Ascending aorta (tissue), 2 donors: ENCODE measurements at regions of chr1 and their contacts with region 1.

Region 1: DNA sequence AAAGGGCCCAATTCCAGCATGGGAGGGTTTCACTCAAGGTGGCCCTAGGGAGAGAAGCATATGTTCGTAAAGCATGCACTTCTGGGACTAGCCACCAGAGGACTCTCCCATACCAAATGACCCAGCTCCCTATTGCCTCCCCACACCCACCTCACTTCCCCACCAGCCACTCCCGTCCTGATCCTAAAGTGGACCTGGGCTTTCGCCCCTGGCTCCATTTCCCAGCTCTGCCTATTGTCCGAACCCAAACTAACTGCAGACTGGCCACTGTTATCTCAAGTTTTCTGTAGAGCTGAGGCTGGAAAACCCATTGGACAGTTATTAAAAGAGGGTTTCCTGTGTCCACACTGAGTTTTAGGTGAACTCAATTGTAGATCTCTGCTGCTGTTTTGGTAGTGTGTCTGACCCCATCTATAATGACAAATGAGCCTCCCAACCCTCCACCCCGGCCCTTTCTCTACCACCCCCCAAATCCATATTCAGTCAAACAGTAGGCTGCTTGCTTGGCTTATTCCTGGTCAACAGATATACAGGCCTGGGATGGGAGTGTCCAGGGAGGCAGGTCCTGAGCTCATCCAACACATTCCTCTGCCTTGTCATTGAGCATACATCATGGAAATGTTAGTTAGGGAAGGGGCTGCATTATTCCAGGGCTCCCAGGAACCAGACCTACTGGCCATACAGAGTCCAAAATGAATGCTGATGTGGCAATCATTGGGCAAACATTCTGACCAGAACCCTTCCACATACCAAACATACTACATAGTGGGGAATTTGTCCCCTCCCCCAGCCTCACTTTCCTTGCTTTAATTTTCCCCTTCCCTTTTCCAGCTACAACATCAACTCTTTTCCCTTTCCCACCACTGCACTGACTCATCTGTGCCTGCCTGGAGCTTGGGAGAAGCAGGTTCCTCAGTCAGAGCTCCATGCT is 59.2 kb downstream of the ABCA4 start:
- DNase-seq: peak in 1 of 2 donors; percentile 85
- H3K4me3 ChIP-seq: no peak overlapping the region
- H3K27ac ChIP-seq: peak overlapping the region in 1 of 2 donors; percentile 18
- H3K4me1 ChIP-seq: peaks cover 0 to 6% of the 10 kb centered on the region in 2 donors
- H3K27me3 ChIP-seq: no peaks in the 10 kb centered on the region
- CTCF ChIP-seq: peak; percentile 84 to 93 (median 86)

Region 2: DNA sequence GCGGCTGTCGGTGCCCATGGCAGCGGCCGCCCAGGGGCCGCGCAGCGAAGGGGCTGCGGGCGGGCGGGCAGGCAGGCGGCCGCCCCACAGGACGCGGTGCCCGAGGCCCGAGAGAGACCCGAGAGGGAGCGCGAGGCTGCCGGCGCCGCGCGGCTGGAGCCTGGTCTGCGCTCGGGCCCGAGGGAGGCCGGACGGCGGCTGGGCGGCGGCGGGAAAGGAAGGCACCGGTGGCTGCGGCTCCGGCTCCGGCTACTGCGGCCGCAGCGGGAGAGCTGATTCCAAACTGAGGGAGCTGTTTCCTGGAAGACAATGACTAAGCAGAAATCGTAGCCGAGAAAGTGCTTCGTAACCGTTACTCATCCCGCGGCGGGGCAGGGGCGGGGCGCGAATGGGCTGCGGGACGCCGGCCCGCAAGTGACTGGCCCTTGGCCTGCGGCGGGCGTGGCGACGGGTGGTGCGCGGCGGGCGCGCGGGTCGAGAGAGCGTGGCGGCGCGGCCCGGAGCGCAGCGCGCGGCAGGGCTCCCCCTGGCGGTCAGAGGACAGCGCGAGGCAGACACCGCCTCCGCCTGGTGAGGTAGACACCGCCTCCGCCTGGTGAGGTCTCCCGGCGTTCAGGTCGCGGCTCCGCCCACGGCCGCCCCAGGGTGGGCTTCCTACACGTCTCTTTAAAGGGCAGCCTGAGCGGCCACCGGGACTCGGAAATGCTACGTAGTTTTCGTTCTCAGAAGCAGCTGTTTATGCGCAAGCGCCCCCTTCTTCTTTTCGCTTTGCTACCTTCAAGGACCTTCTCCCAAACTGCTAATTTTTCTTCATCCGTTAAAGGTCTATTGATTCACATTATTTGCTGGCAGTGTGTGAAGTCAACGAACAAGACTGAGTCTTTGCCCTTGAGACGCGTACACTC is 152.4 kb before region 1 on chr1 and contains the start of gene GCLM:
- intact Hi-C with region 1: no loop called
- DNase-seq: peak; percentile 79 to 97
- H3K4me3 ChIP-seq: peak within 1 kb of the TSS; percentile 92 to 96
- H3K27ac ChIP-seq: peak within 1 kb of the TSS; percentile 82 to 89
- H3K4me1 ChIP-seq: peaks cover 0 to 7% of the 10 kb centered on the region in 2 donors
- H3K27me3 ChIP-seq: no peaks in the 10 kb centered on the region
- CTCF ChIP-seq: peak; percentile 67 to 95 (median 80)
- total RNA-seq, gene GCLM: 3.3 TPM

Region 3: GRCh38 chr1:93925206-93925605 is 136.6 kb before region 1 on chr1:
- intact Hi-C with region 1: no loop called
- DNase-seq: no peak
- H3K4me3 ChIP-seq: no peak overlapping the region
- H3K27ac ChIP-seq: no peak overlapping the region
- H3K4me1 ChIP-seq: no peaks in the 10 kb centered on the region
- H3K27me3 ChIP-seq: no peaks in the 10 kb centered on the region
- CTCF ChIP-seq: no peak

Region 4: GRCh38 chr1:94025383-94026340 is 36.1 kb before region 1 on chr1:
- intact Hi-C with region 1: loop called (anchors 2 kb)
- DNase-seq: no peak
- H3K4me3 ChIP-seq: no peak overlapping the region
- H3K27ac ChIP-seq: no peak overlapping the region
- H3K4me1 ChIP-seq: peaks cover 0 to 5% of the 10 kb centered on the region in 2 donors
- H3K27me3 ChIP-seq: no peaks in the 10 kb centered on the region
- CTCF ChIP-seq: peak; percentile 28 to 70 (median 64)